ENCODE measurements at regions of chr17 and their contacts with region 1.

Region 1: GRCh38 chr17:1783834-1784611 is 22.2 kb downstream of the SERPINF1 start:
- DNase-seq: peak; percentile 46
- H3K4me3 ChIP-seq: no peak overlapping the region
- H3K27ac ChIP-seq: peak overlapping the region; percentile 17
- H3K4me1 ChIP-seq: peaks cover 37% of the 10 kb centered on the region
- H3K27me3 ChIP-seq: no peaks in the 10 kb centered on the region
- CTCF ChIP-seq: peak; percentile 72 to 81

Region 2: DNA sequence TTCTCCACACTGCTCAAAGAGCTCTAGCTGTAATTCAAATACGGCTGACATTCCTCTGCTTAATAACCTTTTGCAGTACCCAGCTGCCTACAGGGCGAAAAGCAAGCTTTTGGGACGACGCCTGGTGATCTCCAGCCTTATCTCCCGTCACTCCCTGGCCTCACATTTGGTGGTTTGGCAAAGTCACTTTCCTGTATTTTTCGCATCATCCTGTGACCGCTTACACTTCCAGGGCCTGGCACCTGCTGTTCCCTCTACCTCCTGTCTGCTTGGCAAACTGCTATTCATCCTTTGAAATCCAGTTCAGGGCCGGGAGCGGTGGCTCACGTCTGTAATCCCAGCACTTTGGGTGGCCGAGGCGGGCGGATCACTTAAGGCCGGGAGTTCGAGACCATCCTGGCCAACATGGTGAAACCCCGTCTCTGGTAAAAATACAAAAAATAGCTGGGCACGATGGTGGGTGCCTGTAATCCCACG is 516.5 kb before region 1 on chr17:
- CTCF ChIA-PET with region 1: interaction called, 21 read pairs
- dilution Hi-C with region 1: no loop called
- in situ Hi-C with region 1: no loop called
- intact Hi-C with region 1: no loop called
- DNase-seq: no peak
- H3K4me3 ChIP-seq: peak overlapping the region; percentile 57 to 75 (median 67)
- H3K27ac ChIP-seq: no peak overlapping the region
- H3K4me1 ChIP-seq: no peaks in the 10 kb centered on the region
- H3K27me3 ChIP-seq: peaks cover 19% of the 10 kb centered on the region
- CTCF ChIP-seq: no peak

Region 3: DNA sequence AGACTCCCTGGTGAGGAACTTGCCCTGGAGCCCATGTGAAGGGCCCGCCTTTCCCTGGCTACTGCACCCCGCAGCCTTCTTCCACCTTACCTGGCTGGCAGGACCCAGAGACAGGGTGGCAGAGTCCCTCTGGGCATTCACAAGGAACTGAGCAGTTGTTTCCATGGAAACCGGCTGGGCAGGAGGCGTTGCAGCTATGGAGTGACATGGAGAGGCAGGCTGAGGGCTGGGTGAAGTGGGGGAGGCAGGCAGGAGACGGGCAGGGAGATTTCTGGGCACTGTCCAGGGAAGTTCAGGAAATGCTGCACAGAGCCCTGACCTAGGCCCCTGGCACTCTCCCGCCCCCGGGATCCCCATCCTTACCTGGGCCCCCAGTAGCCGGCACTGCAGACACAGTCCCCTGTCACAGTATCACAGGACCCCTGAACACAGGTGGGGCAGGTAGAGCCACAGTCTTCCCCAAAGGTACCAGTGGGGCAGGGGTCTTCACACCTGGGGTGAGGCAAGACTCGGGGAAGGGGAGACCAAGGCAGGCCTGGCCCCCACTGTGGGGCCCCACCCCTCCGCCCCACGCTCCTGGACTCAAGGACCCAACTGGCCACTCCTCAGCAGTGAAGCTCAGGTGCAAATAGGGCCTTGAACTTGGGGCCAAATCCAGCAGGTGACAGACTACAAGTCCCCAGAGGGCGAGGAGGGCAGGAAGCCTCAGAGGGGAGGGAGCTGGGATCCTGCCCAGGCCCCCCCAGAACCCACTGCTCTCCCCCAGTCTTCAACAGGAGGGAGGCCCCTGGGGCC is 144.3 kb before region 1 on chr17:
- CTCF ChIA-PET with region 1: no interaction called
- dilution Hi-C with region 1: loop called (anchors 5 kb)
- in situ Hi-C with region 1: no loop called
- intact Hi-C with region 1: no loop called
- DNase-seq: no peak
- H3K4me3 ChIP-seq: no peak overlapping the region
- H3K27ac ChIP-seq: no peak overlapping the region
- H3K4me1 ChIP-seq: peaks cover 15% of the 10 kb centered on the region
- H3K27me3 ChIP-seq: no peaks in the 10 kb centered on the region
- CTCF ChIP-seq: no peak

Region 4: GRCh38 chr17:1673041-1673785 is 110.8 kb before region 1 on chr17:
- CTCF ChIA-PET with region 1: no interaction called
- dilution Hi-C with region 1: no loop called
- in situ Hi-C with region 1: no loop called
- intact Hi-C with region 1: loop called (anchors 1 kb)
- DNase-seq: no peak
- H3K4me3 ChIP-seq: no peak overlapping the region
- H3K27ac ChIP-seq: no peak overlapping the region
- H3K4me1 ChIP-seq: no peaks in the 10 kb centered on the region
- H3K27me3 ChIP-seq: no peaks in the 10 kb centered on the region
- CTCF ChIP-seq: no peak

Region 5: GRCh38 chr17:1730328-1731193 is 53.5 kb before region 1 on chr17:
- CTCF ChIA-PET with region 1: interaction called, 5 read pairs
- dilution Hi-C with region 1: loop called (anchors 5 kb)
- in situ Hi-C with region 1: no loop called
- intact Hi-C with region 1: no loop called
- DNase-seq: peak; percentile 85
- H3K4me3 ChIP-seq: peak overlapping the region in 1 of 3 experiments; percentile 1
- H3K27ac ChIP-seq: peak overlapping the region; percentile 89
- H3K4me1 ChIP-seq: peaks cover 34% of the 10 kb centered on the region
- H3K27me3 ChIP-seq: no peaks in the 10 kb centered on the region
- CTCF ChIP-seq: no peak

Measured in mammary epithelial cell (primary cell).